Endothelial cell of umbilical vein (primary cell): ENCODE measurements at regions of chr6 and their contacts with region 1.

Region 1: DNA sequence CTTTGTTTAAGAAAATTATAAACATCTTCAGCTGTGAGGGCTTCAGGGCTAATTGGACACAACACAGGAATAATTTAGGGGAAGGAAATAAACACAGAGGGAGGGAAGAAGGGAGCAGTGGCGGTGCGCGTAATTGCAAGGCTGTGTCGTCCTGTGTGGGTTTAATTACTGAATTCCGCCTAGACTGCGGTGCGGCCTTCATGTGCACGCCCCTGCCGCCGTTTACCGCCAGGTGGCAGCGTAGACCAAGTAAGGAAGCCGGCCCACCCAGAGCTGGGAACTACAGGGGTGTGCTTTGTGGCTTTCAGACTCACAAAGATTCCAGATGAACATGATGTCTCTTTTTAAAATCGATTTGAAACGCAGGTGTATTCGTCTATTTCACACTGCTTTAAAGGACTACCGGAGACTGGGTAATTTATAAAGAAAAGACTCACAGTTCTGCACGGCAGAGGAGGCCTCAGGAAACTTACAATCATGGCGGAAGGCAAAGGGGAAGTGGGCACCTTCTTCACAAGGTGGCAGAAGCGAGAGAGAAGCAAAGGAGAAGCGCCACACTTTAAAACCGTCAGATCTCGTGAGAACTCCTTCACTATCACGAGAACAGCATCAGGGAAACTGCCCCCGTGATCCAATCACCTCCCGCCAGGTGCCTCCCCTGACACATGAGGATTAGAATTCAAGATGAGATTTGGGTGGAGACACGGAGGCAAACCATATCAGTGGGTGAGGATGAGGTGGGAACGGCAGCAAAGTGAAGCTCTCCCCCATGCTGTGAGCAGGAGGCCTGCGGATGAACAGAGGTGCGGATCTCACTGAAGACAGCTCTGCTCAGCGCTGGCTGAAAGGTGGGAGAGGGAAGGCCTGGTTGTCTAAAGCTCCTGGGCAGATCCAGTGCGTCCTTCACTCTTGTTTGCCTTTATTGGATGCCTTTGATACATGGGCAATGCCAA is 222.0 kb upstream of the PDE10A start:
- DNase-seq: peak; percentile 59
- H3K4me3 ChIP-seq: no peak overlapping the region
- H3K27ac ChIP-seq: no peak overlapping the region
- H3K4me1 ChIP-seq: no peaks in the 10 kb centered on the region
- H3K27me3 ChIP-seq: no peaks in the 10 kb centered on the region
- CTCF ChIP-seq: peak; percentile 81 to 88
- POLR2A ChIP-seq: no peak

Region 2: DNA sequence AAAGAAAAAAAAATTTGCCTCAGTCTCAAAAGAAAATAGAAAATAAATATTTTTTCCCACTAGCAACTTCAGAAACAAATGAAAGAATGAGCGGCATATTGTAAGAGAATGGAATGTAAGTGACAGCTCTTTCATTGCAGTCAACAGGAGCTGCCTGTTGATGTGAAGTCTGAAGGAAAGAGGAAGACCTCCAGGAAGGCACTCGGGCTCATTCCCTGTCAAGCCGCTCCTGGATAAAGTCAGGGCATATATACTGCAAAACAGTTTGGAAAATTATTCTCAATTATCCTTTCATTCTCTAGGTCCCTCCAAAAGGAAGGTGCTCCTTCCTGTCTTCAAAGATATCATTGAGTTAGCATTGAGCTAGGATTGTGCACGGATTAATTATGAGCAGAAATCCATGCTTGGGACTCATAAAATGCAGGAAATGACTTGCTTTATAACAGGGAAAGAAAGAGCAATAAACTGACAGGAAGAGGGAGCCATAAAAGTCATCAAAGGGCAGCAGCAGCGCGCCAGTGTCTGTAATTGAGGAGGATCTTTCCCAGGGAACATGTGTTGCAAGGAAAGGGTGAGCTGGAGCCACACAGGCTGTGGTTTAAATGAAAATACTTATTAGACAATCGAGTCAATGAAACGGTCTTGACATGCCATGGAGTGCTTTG is 793.8 kb before region 1 on chr6:
- CTCF ChIA-PET with region 1: no interaction called
- POLR2A ChIA-PET with region 1: no interaction called
- dilution Hi-C with region 1: no loop called
- intact Hi-C with region 1: no loop called
- DNase-seq: no peak
- H3K4me3 ChIP-seq: no peak overlapping the region
- H3K27ac ChIP-seq: no peak overlapping the region
- H3K4me1 ChIP-seq: no peaks in the 10 kb centered on the region
- H3K27me3 ChIP-seq: no peaks in the 10 kb centered on the region
- CTCF ChIP-seq: no peak
- POLR2A ChIP-seq: no peak

Region 3: DNA sequence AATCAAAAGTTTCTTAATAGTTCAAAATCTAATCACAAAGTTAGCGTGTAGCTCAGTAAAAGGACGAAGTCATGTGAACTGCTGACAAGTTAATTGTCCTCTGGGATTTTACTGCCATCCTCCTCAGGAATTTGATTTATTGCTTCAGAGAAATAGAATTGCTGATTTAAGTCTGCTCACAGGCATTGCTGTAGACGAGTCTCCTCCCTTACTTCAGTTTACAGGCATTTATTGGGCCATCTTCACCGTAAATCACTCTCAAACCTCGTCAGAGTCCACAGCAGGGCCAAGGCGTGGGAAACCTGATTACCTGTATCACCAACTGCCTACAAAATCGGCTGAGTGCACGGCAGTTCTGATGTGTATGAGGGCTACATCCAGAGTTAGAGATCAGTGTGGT is 103.0 kb before region 1 on chr6:
- CTCF ChIA-PET with region 1: no interaction called
- POLR2A ChIA-PET with region 1: no interaction called
- dilution Hi-C with region 1: no loop called
- intact Hi-C with region 1: no loop called
- DNase-seq: no peak
- H3K4me3 ChIP-seq: no peak overlapping the region
- H3K27ac ChIP-seq: no peak overlapping the region
- H3K4me1 ChIP-seq: no peaks in the 10 kb centered on the region
- H3K27me3 ChIP-seq: peaks cover 1 to 5% of the 10 kb centered on the region in 2 experiments
- CTCF ChIP-seq: no peak
- POLR2A ChIP-seq: no peak

Region 4: GRCh38 chr6:165937564-165938358 is 52.7 kb after region 1 on chr6:
- CTCF ChIA-PET with region 1: no interaction called
- POLR2A ChIA-PET with region 1: no interaction called
- dilution Hi-C with region 1: no loop called
- intact Hi-C with region 1: no loop called
- DNase-seq: no peak
- H3K4me3 ChIP-seq: no peak overlapping the region
- H3K27ac ChIP-seq: no peak overlapping the region
- H3K4me1 ChIP-seq: no peaks in the 10 kb centered on the region
- H3K27me3 ChIP-seq: no peaks in the 10 kb centered on the region
- CTCF ChIP-seq: no peak
- POLR2A ChIP-seq: no peak

Region 5: GRCh38 chr6:166097915-166098522 is 212.9 kb after region 1 on chr6:
- CTCF ChIA-PET with region 1: interaction called, 35 read pairs
- POLR2A ChIA-PET with region 1: no interaction called
- dilution Hi-C with region 1: no loop called
- intact Hi-C with region 1: loop called (anchors 1 kb)
- DNase-seq: peak; percentile 42
- H3K4me3 ChIP-seq: no peak overlapping the region
- H3K27ac ChIP-seq: no peak overlapping the region
- H3K4me1 ChIP-seq: no peaks in the 10 kb centered on the region
- H3K27me3 ChIP-seq: peaks cover 0 to 2% of the 10 kb centered on the region in 2 experiments
- CTCF ChIP-seq: peak; percentile 75 to 93
- POLR2A ChIP-seq: no peak

Region 6: DNA sequence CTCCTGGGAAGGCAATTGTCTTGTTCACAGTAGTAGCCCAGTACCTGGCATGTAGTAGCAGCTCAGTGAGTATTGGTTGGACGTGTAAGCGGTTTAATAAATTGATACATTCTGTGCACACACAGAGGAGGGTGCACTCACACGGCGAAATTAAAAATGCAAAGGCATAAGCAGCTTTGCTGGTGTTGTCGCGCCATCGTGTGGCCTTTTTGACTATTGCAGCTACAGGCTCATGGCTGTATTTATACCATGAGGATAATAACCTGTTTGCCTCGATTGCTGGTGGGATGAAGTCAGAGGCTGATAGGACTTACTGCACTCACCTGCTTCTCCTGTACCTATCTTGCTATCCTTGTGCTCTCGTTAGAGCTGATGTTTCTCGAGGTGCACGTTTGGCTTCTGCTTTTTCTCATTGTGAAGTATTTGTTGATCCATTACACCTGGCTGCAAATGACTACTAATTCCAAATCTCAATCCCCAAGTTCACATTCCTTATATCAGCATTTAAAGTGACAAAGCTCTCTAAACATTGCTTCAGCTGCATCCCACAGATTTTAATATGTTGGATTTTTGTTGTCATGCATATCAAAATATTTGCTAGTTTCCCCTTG is 221.1 kb after region 1 on chr6:
- CTCF ChIA-PET with region 1: interaction called, 79 read pairs
- POLR2A ChIA-PET with region 1: no interaction called
- dilution Hi-C with region 1: no loop called
- intact Hi-C with region 1: loop called (anchors 1 kb)
- DNase-seq: peak; percentile 49
- H3K4me3 ChIP-seq: no peak overlapping the region
- H3K27ac ChIP-seq: no peak overlapping the region
- H3K4me1 ChIP-seq: no peaks in the 10 kb centered on the region
- H3K27me3 ChIP-seq: no peaks in the 10 kb centered on the region
- CTCF ChIP-seq: peak; percentile 69 to 71
- POLR2A ChIP-seq: no peak